Activated CD4-positive, alpha-beta memory T cell treated with anti-CD3 and anti-CD28 coated beads for 36 hours (primary cell): ENCODE measurements at regions of chr3 and their contacts with region 1.

Region 1: DNA sequence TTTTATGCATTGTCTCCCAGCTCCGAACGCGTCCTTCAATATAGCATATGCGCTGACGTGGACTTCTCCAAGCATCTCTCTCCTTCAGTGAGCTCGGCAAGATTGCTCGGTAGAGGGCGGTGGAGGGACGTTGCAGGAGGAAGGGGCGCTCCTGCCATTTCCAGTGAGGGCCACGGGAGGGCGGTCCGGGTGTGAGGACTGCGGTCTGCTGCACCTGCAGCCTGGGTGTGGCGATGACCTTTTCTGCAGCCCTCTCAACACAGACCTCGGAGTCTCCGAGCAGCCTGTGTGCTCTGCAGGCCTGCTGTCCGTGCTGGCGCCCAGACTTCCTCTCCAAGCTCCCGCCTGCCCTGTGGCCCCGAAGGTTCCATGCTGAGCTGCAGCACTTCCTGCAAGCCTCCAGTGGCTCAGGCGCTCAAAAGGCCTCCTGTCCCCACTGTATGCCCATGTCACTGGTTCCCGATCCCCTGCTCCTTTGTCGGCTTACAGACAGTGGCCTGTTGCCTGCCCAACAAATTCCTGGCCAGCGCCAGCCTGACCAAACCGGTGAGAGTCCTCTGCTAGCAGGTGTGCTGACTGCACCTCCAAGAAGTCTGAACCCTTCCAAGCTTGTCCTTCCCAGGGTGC is 8.9 kb upstream of the RTP3 start:
- DNase-seq: peak; percentile 96
- H3K4me3 Mint-ChIP-seq: peak overlapping the region; percentile 21
- H3K27ac Mint-ChIP-seq: no peak overlapping the region
- H3K4me1 Mint-ChIP-seq: peaks cover 11% of the 10 kb centered on the region
- H3K27me3 Mint-ChIP-seq: no peaks in the 10 kb centered on the region

Region 2: GRCh38 chr3:46462111-46462510 is 26.7 kb before region 1 on chr3:
- CTCF ChIA-PET with region 1: interaction called, 13 read pairs
- POLR2A ChIA-PET with region 1: no interaction called
- intact Hi-C with region 1: no loop called
- DNase-seq: no peak
- H3K4me3 Mint-ChIP-seq: no peak overlapping the region
- H3K27ac Mint-ChIP-seq: no peak overlapping the region
- H3K4me1 Mint-ChIP-seq: no peaks in the 10 kb centered on the region
- H3K27me3 Mint-ChIP-seq: peaks cover 45% of the 10 kb centered on the region

Region 3: GRCh38 chr3:46477145-46477544 is 11.7 kb before region 1 on chr3:
- CTCF ChIA-PET with region 1: interaction called, 14 read pairs
- POLR2A ChIA-PET with region 1: no interaction called
- intact Hi-C with region 1: no loop called
- DNase-seq: no peak
- H3K4me3 Mint-ChIP-seq: no peak overlapping the region
- H3K27ac Mint-ChIP-seq: no peak overlapping the region
- H3K4me1 Mint-ChIP-seq: no peaks in the 10 kb centered on the region
- H3K27me3 Mint-ChIP-seq: peaks cover 25% of the 10 kb centered on the region

Region 4: GRCh38 chr3:46533091-46533490 is 44.2 kb after region 1 on chr3:
- CTCF ChIA-PET with region 1: interaction called, 43 read pairs
- POLR2A ChIA-PET with region 1: no interaction called
- intact Hi-C with region 1: loop called (anchors 5 kb)
- DNase-seq: no peak
- H3K4me3 Mint-ChIP-seq: no peak overlapping the region
- H3K27ac Mint-ChIP-seq: no peak overlapping the region
- H3K4me1 Mint-ChIP-seq: peaks cover 22% of the 10 kb centered on the region
- H3K27me3 Mint-ChIP-seq: no peaks in the 10 kb centered on the region

Region 5: DNA sequence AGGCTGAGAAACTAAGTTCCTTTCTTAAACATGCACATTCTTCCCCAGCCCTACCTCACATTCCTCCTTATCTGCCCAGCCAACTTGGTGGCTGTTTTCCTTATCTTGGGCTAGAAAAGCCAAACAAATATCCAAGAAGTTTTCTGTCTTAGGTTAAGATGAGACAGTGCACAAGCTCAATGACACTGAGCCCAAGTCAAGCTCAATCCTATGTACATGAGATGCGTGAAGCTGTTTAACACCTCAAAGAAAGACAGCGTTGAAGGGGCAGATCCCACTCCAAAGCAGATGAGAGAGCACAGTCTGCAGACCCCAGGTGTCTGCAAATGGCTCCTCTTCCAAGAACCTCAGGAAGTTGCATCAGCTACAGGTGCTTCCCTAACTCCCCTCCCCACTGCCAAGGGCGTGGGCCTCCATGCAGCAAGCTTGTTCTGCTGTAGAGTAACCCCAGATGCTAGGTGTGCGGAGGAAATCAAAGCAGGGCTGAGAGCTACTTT is 60.6 kb after region 1 on chr3:
- CTCF ChIA-PET with region 1: interaction called, 11 read pairs
- POLR2A ChIA-PET with region 1: no interaction called
- intact Hi-C with region 1: no loop called
- DNase-seq: no peak
- H3K4me3 Mint-ChIP-seq: no peak overlapping the region
- H3K27ac Mint-ChIP-seq: no peak overlapping the region
- H3K4me1 Mint-ChIP-seq: peaks cover 6% of the 10 kb centered on the region
- H3K27me3 Mint-ChIP-seq: peaks cover 2% of the 10 kb centered on the region

Region 6: DNA sequence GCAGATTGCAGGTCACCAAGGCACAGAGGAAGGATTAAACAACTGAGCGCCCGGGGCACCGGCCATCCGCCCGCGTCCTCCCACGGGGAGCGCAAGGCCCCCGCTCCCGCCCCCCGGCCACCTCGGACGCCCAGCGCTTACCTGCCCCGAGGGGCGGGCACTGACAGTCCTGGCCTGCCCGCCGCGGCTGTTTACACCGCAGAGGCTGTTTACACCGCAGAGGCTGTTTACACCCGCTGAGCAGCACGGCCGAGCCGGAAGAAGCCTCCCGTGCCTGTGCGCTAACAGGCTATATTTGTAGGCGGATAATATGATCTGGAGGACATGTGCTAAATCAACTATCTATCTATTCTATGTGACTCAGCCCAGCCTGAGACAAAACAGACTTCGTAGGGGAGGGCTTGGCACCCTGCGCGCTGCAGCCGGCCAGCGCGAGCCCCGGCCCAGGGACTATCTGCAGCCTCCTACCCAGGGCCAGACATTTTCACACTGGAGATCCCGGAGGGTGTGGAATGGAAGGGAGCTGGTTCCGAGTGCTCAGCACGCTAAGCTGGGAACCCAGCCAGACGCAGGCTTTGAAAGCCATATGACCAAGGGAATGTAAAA is 77.3 kb after region 1 on chr3 and contains the start of gene LRRC2:
- CTCF ChIA-PET with region 1: interaction called, 168 read pairs
- POLR2A ChIA-PET with region 1: no interaction called
- intact Hi-C with region 1: no loop called
- DNase-seq: peak; percentile 31
- H3K4me3 Mint-ChIP-seq: peak within 1 kb of the TSS; percentile 51
- H3K27ac Mint-ChIP-seq: no peak within 1 kb of the TSS
- H3K4me1 Mint-ChIP-seq: peaks cover 10% of the 10 kb centered on the region
- H3K27me3 Mint-ChIP-seq: peaks cover 16% of the 10 kb centered on the region
- total RNA-seq, gene LRRC2: not detected

Region 7: GRCh38 chr3:46695177-46695961 is 206.5 kb after region 1 on chr3:
- CTCF ChIA-PET with region 1: interaction called, 10 read pairs
- POLR2A ChIA-PET with region 1: no interaction called
- intact Hi-C with region 1: loop called (anchors 5 kb)
- DNase-seq: peak; percentile 63
- H3K4me3 Mint-ChIP-seq: peak overlapping the region; percentile 57
- H3K27ac Mint-ChIP-seq: peak overlapping the region; percentile 80
- H3K4me1 Mint-ChIP-seq: peaks cover 49% of the 10 kb centered on the region
- H3K27me3 Mint-ChIP-seq: no peaks in the 10 kb centered on the region